Heart right ventricle (tissue), 16 donors: ENCODE measurements at regions of chr3 and their contacts with region 1.

Region 1: DNA sequence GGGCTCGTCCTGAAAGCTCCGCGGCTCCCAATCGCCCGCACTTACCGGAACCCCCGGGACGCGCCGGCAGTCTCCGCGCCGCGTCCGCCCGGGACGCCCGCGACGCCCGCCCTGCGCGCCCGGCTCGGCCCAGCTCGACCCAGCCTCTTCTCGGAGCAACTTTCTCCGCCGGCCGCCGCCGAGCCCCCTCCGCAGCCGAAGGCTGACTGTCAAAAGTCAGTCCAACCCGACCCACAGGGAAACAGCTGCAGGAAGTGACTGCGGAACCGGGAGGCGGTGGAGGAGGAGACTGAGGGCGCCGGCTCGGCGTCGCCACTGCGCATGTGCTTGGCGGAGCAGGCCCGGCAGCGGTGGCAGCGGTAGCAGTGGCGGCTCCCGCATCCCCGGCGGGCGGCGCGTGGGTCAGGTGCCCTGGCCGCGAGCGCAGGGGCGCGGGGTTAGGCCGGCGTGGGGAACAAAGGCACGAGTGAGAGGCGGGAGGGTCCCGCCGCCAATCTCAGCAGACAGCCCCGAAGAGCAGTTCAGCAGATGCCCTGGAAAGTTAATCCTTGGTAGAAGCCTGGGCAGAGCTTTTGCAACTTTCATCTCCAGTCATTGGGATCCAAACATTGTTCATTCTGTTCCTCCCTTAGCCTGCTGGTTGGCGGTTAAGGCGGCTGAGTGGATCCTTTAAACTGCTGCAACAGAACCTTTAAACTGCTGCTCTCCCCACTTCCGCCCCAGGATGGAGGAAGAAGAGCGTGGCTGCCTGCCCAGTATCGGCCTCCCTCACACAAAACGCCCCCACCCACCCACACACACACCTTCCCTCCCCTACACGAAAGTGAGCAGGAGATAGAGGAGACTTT is at the start of gene ZMAT3:
- DNase-seq: peak; percentile 90 to 91
- ATAC-seq: peak; percentile 97 to 99 (median 98)
- H3K4me3 ChIP-seq: peak within 1 kb of the TSS; percentile 64 to 92 (median 77)
- H3K27ac ChIP-seq: peak within 1 kb of the TSS; percentile 53 to 97 (median 90)
- H3K4me1 ChIP-seq: peaks cover 0 to 44% (median 25%) of the 10 kb centered on the region in 9 donors
- H3K27me3 ChIP-seq: no peaks in the 10 kb centered on the region
- CTCF ChIP-seq: no peak
- total RNA-seq, gene ZMAT3: 10.1 to 18.2 (median 13.1) TPM

Region 2: GRCh38 chr3:178823591-178824246 is 248.1 kb before region 1 on chr3:
- intact Hi-C with region 1: no loop called
- DNase-seq: peak in 1 of 2 donors; percentile 47
- ATAC-seq: peak in 7 of 8 donors; percentile 62 to 93 (median 80)
- H3K4me3 ChIP-seq: no peak overlapping the region
- H3K27ac ChIP-seq: peak overlapping the region; percentile 4 to 76 (median 56)
- H3K4me1 ChIP-seq: peaks cover 3 to 34% (median 12%) of the 10 kb centered on the region in 9 donors
- H3K27me3 ChIP-seq: no peaks in the 10 kb centered on the region
- CTCF ChIP-seq: no peak

Region 3: GRCh38 chr3:179027326-179027900 is 44.4 kb before region 1 on chr3:
- intact Hi-C with region 1: loop called in 1 of 10 experiments (anchors 10 kb)
- DNase-seq: no peak
- ATAC-seq: no peak
- H3K4me3 ChIP-seq: no peak overlapping the region
- H3K27ac ChIP-seq: peak overlapping the region in 1 of 10 donors; percentile 11
- H3K4me1 ChIP-seq: peaks cover 0 to 14% (median 0%) of the 10 kb centered on the region in 9 donors
- H3K27me3 ChIP-seq: no peaks in the 10 kb centered on the region
- CTCF ChIP-seq: no peak